CD8-positive, alpha-beta T cell (primary cell): ENCODE measurements at regions of chr18 and their contacts with region 1.

Region 1: GRCh38 chr18:30971338-30971956 is 71.1 kb downstream of the DSC3 start:
- DNase-seq: peak in 1 of 9 experiments; percentile 20
- ATAC-seq: no peak
- H3K4me3 ChIP-seq: no peak overlapping the region
- H3K4me3 Mint-ChIP-seq: no peak overlapping the region
- H3K27ac ChIP-seq: no peak overlapping the region
- H3K27ac Mint-ChIP-seq: no peak overlapping the region
- H3K4me1 ChIP-seq: no peaks in the 10 kb centered on the region
- H3K4me1 Mint-ChIP-seq: no peaks in the 10 kb centered on the region
- H3K27me3 ChIP-seq: no peaks in the 10 kb centered on the region
- H3K27me3 Mint-ChIP-seq: no peaks in the 10 kb centered on the region
- CTCF ChIP-seq: peak; percentile 60

Region 2: DNA sequence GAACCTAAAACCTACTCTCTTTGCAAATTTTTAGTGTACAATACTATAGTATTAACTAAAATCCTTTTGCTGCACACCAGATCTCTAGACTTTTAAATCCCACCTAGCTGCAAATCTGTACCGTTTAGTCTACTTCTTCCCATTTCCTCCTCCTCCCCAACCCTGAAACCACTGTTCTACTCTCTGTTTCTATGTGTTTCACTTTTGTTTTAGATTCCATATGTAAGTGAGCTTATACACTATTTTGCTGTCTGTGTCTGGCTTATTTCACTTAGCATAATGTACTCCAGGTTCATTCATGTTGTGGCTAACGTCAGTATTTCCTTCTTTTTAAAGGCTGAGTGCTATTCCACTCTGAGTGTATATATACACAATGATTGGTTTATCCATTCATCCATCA is 149.1 kb after region 1 on chr18:
- CTCF ChIA-PET with region 1: no interaction called
- POLR2A ChIA-PET with region 1: no interaction called
- intact Hi-C with region 1: no loop called
- DNase-seq: no peak
- ATAC-seq: no peak
- H3K4me3 ChIP-seq: no peak overlapping the region
- H3K4me3 Mint-ChIP-seq: no peak overlapping the region
- H3K27ac ChIP-seq: no peak overlapping the region
- H3K27ac Mint-ChIP-seq: no peak overlapping the region
- H3K4me1 ChIP-seq: no peaks in the 10 kb centered on the region
- H3K4me1 Mint-ChIP-seq: no peaks in the 10 kb centered on the region
- H3K27me3 ChIP-seq: no peaks in the 10 kb centered on the region
- H3K27me3 Mint-ChIP-seq: no peaks in the 10 kb centered on the region
- CTCF ChIP-seq: no peak

Region 3: GRCh38 chr18:31207422-31207821 is 236.0 kb after region 1 on chr18:
- CTCF ChIA-PET with region 1: no interaction called
- POLR2A ChIA-PET with region 1: no interaction called
- intact Hi-C with region 1: no loop called
- DNase-seq: no peak
- ATAC-seq: no peak
- H3K4me3 ChIP-seq: no peak overlapping the region
- H3K4me3 Mint-ChIP-seq: no peak overlapping the region
- H3K27ac ChIP-seq: no peak overlapping the region
- H3K27ac Mint-ChIP-seq: no peak overlapping the region
- H3K4me1 ChIP-seq: no peaks in the 10 kb centered on the region
- H3K4me1 Mint-ChIP-seq: no peaks in the 10 kb centered on the region
- H3K27me3 ChIP-seq: no peaks in the 10 kb centered on the region
- H3K27me3 Mint-ChIP-seq: peaks cover 2% of the 10 kb centered on the region
- CTCF ChIP-seq: no peak

Region 4: DNA sequence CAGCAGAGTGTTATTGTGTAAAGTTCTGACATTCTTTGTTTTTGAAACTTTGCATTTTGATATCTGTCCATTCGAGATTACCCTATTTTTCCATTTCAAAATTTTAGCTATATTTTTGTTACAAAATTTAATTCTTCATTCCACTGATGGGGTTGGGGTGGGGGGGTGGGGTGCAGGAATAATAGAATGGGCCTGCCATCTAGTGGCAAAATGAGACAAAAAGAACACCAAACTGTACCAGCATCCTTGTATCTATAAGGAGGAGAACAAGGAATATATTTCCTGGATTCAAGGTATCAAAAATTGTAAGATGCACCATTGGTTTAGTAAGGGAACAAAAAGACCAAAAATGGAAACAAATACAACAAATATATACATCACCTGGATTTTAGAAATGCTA is 592.3 kb after region 1 on chr18:
- CTCF ChIA-PET with region 1: no interaction called
- POLR2A ChIA-PET with region 1: no interaction called
- intact Hi-C with region 1: loop called in 1 of 2 experiments (anchors 5 kb)
- DNase-seq: no peak
- ATAC-seq: no peak
- H3K4me3 ChIP-seq: no peak overlapping the region
- H3K4me3 Mint-ChIP-seq: no peak overlapping the region
- H3K27ac ChIP-seq: no peak overlapping the region
- H3K27ac Mint-ChIP-seq: no peak overlapping the region
- H3K4me1 ChIP-seq: no peaks in the 10 kb centered on the region
- H3K4me1 Mint-ChIP-seq: no peaks in the 10 kb centered on the region
- H3K27me3 ChIP-seq: no peaks in the 10 kb centered on the region
- H3K27me3 Mint-ChIP-seq: no peaks in the 10 kb centered on the region
- CTCF ChIP-seq: no peak